ENCODE measurements at regions of chr19 and their contacts with region 1.

Region 1: DNA sequence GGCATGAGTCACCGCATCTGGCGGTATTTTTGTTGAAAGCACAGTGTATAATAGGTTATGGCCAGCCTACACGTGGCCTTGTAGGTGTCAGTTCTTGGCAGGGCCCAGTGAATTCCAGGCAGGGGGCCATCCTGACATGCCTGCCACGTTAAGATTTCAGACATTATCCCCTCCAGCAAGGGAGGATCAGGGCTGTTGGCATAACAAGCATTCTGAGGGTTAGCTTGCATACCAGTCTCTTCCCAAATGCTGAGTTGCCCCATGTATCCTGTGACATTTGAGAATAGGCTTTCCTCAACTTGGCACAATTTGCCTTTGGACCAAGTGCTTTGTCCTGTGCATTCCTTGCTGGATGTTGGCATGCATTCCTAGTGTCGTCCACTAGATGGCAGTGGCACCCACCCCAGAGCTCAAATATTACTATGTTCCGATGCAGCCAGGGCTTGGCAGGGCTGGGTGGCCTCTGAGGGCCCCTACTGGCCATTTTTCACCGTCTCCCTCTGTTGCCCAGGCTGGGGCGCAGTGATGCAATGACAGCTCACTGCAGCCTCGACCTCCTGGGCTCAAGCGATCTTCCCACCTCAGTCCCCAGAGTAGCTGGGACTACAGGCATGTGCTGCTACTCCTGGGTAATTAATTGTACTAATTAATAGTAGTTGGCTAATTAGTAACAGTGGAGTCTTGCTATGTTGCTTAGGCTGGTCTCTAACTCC is 31.2 kb downstream of the NLRP12 start:
- DNase-seq: peak; percentile 90
- H3K4me3 ChIP-seq: no peak overlapping the region; a peak in 1 of 4 replicates
- H3K27ac ChIP-seq: no peak overlapping the region
- H3K4me1 ChIP-seq: no peaks in the 10 kb centered on the region
- H3K27me3 ChIP-seq: peaks cover 38% of the 10 kb centered on the region
- CTCF ChIP-seq: peak; percentile 99
- EP300 ChIP-seq: no peak
- RAD21 ChIP-seq: peak; percentile 77

Region 2: DNA sequence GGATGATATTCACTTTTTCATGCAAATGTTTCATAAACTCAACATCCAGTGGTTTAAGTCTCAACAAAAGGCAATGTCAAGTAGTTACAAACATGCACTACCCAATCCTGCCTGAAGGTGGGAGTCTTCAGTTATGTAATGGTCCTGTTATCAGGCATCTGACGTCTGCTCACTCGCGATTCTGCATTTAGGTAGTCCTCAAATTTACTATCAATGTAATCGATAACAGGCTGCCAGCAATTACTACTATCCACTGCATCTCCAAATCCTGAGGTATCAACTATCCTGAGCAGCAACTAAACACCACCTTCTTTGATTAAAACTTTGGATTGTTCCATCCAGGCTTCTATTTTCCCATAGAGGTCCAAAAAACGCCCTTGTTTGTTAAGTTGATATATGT is 19.9 kb before region 1 on chr19:
- CTCF ChIA-PET with region 1: interaction called, 14 read pairs
- POLR2A ChIA-PET with region 1: no interaction called
- DNase-seq: peak; percentile 55
- H3K4me3 ChIP-seq: peak overlapping the region in 1 of 2 experiments; percentile 14; a peak in 1 of 4 replicates
- H3K27ac ChIP-seq: no peak overlapping the region
- H3K4me1 ChIP-seq: no peaks in the 10 kb centered on the region
- H3K27me3 ChIP-seq: peaks cover 48% of the 10 kb centered on the region
- CTCF ChIP-seq: peak; percentile 73
- EP300 ChIP-seq: no peak
- RAD21 ChIP-seq: peak; percentile 64

Region 3: DNA sequence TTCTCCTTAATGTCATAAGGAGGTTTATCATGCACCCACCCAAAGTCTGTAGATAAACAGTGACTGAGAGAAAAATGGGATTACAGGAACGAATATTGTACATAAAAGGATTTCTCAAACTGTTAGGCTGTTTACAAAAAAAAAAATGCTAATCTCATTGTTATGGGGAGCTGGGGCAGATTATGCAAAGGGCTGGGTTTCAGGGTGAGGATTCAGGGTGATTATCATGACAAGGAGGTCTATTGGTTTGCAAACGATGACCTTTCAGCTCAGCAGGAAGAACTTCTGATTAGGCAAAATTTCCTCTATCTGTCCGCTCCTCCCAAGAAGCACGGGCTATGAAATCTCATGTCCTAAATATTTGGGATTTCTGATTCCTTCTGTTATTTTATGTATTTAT is 10.2 kb before region 1 on chr19:
- CTCF ChIA-PET with region 1: interaction called, 15 read pairs
- POLR2A ChIA-PET with region 1: no interaction called
- DNase-seq: no peak
- H3K4me3 ChIP-seq: no peak overlapping the region
- H3K27ac ChIP-seq: no peak overlapping the region
- H3K4me1 ChIP-seq: no peaks in the 10 kb centered on the region
- H3K27me3 ChIP-seq: peaks cover 66% of the 10 kb centered on the region
- CTCF ChIP-seq: no peak
- EP300 ChIP-seq: no peak
- RAD21 ChIP-seq: no peak

Region 4: GRCh38 chr19:53808710-53809125 is 15.8 kb after region 1 on chr19:
- CTCF ChIA-PET with region 1: interaction called, 35 read pairs
- POLR2A ChIA-PET with region 1: no interaction called
- DNase-seq: peak; percentile 49
- H3K4me3 ChIP-seq: peak overlapping the region in 1 of 2 experiments; percentile 52; a peak in 1 of 4 replicates
- H3K27ac ChIP-seq: no peak overlapping the region
- H3K4me1 ChIP-seq: no peaks in the 10 kb centered on the region
- H3K27me3 ChIP-seq: peaks cover 39% of the 10 kb centered on the region
- CTCF ChIP-seq: peak; percentile 79
- EP300 ChIP-seq: no peak
- RAD21 ChIP-seq: peak; percentile 79

Region 5: GRCh38 chr19:53819861-53820260 is 27.0 kb after region 1 on chr19:
- CTCF ChIA-PET with region 1: interaction called, 10 read pairs
- POLR2A ChIA-PET with region 1: no interaction called
- DNase-seq: no peak
- H3K4me3 ChIP-seq: no peak overlapping the region
- H3K27ac ChIP-seq: no peak overlapping the region
- H3K4me1 ChIP-seq: no peaks in the 10 kb centered on the region
- H3K27me3 ChIP-seq: peaks cover 20% of the 10 kb centered on the region; the same call in 1 of the 2 replicates
- CTCF ChIP-seq: no peak
- EP300 ChIP-seq: no peak
- RAD21 ChIP-seq: no peak

Region 6: DNA sequence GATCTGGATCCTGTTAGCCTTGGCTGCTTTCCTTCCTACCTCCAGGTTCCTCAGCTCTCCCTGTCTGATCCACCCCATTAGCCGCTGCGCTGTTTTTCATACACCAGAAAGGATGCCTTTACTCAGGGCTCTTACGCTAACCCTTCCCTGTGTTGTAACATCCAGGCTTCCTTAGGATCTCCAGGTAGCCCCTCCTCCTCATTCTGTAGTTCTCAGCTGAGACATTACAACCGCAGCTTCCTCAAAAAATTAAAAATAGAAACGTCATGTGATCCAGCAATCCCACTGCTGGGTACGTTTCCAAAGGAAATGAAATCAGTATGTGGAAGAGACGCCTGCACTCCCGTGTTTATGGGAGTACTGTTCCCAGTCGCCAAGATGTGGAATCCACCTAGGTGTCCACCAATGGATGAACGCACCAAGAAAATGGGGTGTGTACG is 56.4 kb after region 1 on chr19:
- CTCF ChIA-PET with region 1: interaction called, 11 read pairs
- POLR2A ChIA-PET with region 1: no interaction called
- DNase-seq: no peak
- H3K4me3 ChIP-seq: 0 out of 4 replicates have a peak overlapping the region, but pooled peaks of 1 of the 2 experiments have one; percentile 6
- H3K27ac ChIP-seq: peak overlapping the region; percentile 20 to 85; a peak in 3 of 4 replicates
- H3K4me1 ChIP-seq: no peaks in the 10 kb centered on the region
- H3K27me3 ChIP-seq: no peaks in the 10 kb centered on the region
- CTCF ChIP-seq: no peak
- EP300 ChIP-seq: no peak
- RAD21 ChIP-seq: no peak

Region 7: GRCh38 chr19:53898636-53899341 is 105.9 kb after region 1 on chr19:
- CTCF ChIA-PET with region 1: no interaction called
- POLR2A ChIA-PET with region 1: no interaction called
- DNase-seq: peak; percentile 96
- H3K4me3 ChIP-seq: peak overlapping the region in 1 of 2 experiments; percentile 33; a peak in 2 of 4 replicates
- H3K27ac ChIP-seq: no peak overlapping the region
- H3K4me1 ChIP-seq: peaks cover 0 to 5% of the 10 kb centered on the region in 2 experiments; a peak in 1 of 4 replicates
- H3K27me3 ChIP-seq: peaks cover 48% of the 10 kb centered on the region
- CTCF ChIP-seq: no peak
- EP300 ChIP-seq: no peak
- RAD21 ChIP-seq: no peak

Measured in SK-N-SH (cell line).